Esophagus muscularis mucosa (tissue), 4 donors: ENCODE measurements at regions of chr3 and their contacts with region 1.

Region 1: DNA sequence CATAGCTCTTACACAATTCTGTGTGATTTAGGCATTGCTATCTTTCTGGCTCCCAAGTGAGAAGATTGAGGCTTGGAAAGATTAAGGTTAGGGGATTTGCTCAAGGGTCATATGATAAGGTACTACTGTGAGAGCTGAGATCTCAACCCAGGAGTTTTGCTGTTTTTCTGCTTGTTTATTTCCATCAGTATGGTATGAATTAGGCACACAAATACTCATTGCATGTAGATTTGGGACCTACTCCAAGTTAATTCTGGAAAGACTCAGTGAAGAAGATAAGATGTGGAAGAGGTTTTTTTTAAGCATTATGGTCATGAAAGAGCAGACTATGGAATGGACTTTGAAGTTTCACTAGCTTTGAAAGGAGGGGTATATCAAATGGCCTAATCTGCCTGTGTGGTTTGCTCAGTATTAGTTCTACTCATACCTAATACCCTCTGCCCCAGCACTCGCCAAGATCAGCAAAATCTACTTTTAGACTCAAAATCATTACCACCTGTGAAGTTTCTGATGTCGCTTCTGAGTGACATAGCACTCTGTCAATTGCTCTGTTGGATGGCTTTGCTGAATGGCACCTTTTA is 12.5 kb downstream of the MBNL1 start:
- DNase-seq: no peak
- H3K4me3 ChIP-seq: no peak overlapping the region
- H3K27ac ChIP-seq: peak overlapping the region; percentile 24 to 98 (median 66)
- H3K4me1 ChIP-seq: peaks cover 85 to 96% (median 93%) of the 10 kb centered on the region in 4 donors
- H3K27me3 ChIP-seq: no peaks in the 10 kb centered on the region
- CTCF ChIP-seq: no peak
- EP300 ChIP-seq: no peak
- POLR2A ChIP-seq: no peak

Region 2: DNA sequence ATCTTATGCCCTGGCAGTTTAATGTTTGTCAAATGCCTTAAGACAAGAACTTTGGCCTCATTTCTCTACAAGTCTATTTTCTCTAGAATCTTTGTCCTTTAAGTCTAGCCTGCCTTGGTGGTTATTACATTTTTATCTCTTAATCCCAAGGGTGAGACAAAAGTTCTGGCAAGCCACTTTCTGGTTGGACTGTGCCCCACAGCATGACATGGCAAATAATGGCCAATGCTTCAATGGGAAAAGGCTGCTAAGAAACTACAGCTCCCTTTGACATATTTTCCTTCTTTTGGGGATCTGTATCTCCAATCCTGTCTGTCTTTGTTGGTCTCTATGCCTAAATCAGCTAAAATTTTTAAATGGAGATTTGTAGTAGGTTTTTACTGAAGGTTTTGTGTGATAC is 194.1 kb before region 1 on chr3:
- intact Hi-C with region 1: loop called (anchors 10 kb)
- DNase-seq: no peak
- H3K4me3 ChIP-seq: no peak overlapping the region
- H3K27ac ChIP-seq: no peak overlapping the region
- H3K4me1 ChIP-seq: peaks cover 0 to 25% (median 8%) of the 10 kb centered on the region in 4 donors
- H3K27me3 ChIP-seq: no peaks in the 10 kb centered on the region
- CTCF ChIP-seq: no peak
- EP300 ChIP-seq: no peak
- POLR2A ChIP-seq: no peak